ENCODE measurements at regions of chr10 and their contacts with region 1.

Region 1: DNA sequence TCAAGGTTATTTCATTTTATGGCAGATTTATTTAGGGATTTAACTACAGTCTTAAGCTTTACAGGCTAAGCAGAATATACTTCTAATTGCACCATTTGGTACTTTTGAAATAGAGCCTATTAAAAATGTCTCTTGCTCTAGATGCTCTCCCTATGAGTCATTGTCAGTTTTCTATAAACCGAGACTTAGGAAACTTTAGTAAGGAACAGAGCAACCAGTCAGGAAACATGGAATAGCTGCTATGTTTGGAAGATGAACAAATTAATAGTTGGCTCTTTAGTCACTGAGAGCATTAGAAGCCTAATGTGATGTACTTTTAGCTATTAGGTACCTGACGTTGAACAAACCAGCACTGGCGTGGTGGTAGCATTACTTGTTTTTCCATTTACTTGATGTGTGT is 35.3 kb downstream of the INPP5F start:
- DNase-seq: no peak
- ATAC-seq: peak; percentile 81 to 95 (median 92)
- H3K4me3 ChIP-seq: no peak overlapping the region
- H3K27ac ChIP-seq: peak overlapping the region; percentile 38
- H3K4me1 ChIP-seq: peaks cover 15% of the 10 kb centered on the region
- H3K27me3 ChIP-seq: no peaks in the 10 kb centered on the region
- CTCF ChIP-seq: no peak

Region 2: GRCh38 chr10:119803264-119803663 is 42.2 kb after region 1 on chr10:
- intact Hi-C with region 1: no loop called
- DNase-seq: no peak
- ATAC-seq: peak; percentile 61 to 91 (median 83)
- H3K4me3 ChIP-seq: no peak overlapping the region
- H3K27ac ChIP-seq: peak overlapping the region; percentile 21
- H3K4me1 ChIP-seq: peaks cover 9% of the 10 kb centered on the region
- H3K27me3 ChIP-seq: no peaks in the 10 kb centered on the region
- CTCF ChIP-seq: no peak

Region 3: DNA sequence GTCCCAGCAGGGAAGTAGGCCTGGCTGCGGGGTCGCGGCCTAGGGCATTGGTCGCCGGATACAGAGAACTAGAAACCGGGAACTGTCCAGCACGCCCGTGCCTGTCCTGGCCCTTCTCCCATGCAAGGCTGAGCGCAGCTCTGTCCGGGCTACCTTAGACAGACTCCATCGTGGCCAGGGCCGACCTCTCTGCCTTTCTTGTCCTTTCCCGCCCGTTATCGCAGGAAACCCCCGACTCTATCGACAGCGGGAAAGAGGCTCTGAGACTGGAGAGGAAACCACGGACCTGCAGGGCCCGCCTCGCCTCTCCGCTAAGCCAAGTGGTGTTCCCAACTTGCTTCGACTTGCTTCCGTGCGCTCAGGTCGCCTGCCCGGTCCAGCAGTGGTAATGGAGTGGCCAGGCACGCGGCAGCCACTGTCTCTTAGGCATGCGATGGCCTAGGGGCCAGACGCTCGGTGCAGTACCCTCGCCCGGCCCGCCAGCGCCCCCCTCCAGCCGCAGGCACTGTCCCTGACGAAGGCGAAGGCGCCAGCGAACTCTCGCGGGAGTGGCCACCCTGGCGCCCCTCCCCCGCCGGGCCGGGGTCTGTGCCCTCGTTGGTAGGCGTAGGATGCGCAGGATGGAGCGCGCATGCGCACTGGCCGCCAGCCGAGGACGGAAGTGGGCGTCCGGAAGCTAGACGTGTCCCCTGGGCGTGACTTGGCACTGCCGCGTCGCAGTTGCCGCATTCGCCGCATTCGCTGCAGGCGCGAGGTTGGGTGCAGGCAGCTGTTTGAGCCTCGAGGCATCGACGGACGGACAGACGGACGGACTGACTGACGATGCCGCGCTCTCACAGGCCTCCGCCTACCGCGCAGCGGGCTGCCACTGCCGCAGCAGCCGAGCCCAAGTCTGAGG is 57.1 kb after region 1 on chr10:
- intact Hi-C with region 1: loop called in 1 of 2 experiments (anchors 10 kb)
- DNase-seq: peak; percentile 67 to 74
- ATAC-seq: peak in 3 of 4 donors; percentile 33 to 40 (median 35)
- H3K4me3 ChIP-seq: peak overlapping the region; percentile 17
- H3K27ac ChIP-seq: no peak overlapping the region
- H3K4me1 ChIP-seq: no peaks in the 10 kb centered on the region
- H3K27me3 ChIP-seq: no peaks in the 10 kb centered on the region
- CTCF ChIP-seq: no peak

Measured in psoas muscle (tissue), 8 donors.